BJ (cell line): ENCODE measurements at regions of chr17 and their contacts with region 1.

Region 1: GRCh38 chr17:64420143-64420971 is 28.6 kb upstream of the MILR1 start:
- DNase-seq: peak; percentile 15
- H3K4me3 ChIP-seq: no peak overlapping the region
- H3K27me3 ChIP-seq: peaks cover 2% of the 10 kb centered on the region; the same call in 1 of the 2 replicates
- CTCF ChIP-seq: peak; percentile 71

Region 2: DNA sequence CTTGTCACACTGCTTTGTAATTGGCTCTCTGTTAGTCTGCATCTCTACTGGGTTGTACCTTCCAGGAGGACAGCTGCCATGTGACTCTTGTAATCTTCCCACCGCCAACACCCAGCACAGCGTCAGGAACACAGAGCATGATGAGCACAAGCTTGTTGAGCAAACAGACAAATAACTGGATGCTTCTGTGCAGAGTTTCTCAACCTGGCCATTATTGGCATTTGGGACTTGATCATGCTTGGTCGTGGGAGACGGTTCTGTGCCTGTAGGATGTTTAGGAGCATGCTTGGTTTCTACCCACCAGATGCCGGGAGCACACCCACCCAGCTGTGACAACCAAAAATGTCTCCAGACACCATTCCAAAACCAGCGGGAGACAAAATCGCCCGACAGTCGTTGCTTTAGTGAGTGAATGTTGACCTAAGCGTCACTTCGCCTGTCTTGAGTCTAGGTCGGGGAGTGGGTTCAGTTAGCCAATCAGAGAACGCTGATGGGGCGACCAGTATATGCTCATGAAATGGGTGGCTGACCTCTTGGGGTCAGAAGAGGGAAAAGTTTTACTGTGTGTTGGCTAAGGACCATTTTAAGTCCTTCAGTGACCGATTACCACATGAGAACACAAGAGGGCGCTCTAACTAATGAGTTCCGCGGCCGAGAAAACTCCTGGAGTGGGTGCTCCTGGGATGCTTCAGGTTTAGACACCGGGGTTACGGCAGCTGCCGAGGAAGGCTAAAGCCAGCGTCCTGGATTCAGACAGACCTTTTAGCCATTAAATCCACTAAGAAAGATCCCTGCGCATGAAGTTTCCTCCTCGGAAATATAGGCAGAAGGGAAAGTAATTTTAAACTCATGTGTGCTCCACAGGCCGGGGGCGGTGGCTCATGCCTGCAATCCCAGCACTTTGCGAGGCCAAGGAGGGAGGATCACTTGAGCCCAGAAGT is 99.5 kb before region 1 on chr17:
- CTCF ChIA-PET with region 1: interaction called, 481 read pairs
- POLR2A ChIA-PET with region 1: no interaction called
- DNase-seq: no peak
- H3K4me3 ChIP-seq: no peak overlapping the region
- H3K27me3 ChIP-seq: peaks cover 4% of the 10 kb centered on the region
- CTCF ChIP-seq: peak; percentile 78

Region 3: GRCh38 chr17:64331946-64332493 is 88.3 kb before region 1 on chr17:
- CTCF ChIA-PET with region 1: interaction called, 51 read pairs
- POLR2A ChIA-PET with region 1: no interaction called
- DNase-seq: no peak
- H3K4me3 ChIP-seq: no peak overlapping the region
- H3K27me3 ChIP-seq: peaks cover 2% of the 10 kb centered on the region
- CTCF ChIP-seq: no peak

Region 4: DNA sequence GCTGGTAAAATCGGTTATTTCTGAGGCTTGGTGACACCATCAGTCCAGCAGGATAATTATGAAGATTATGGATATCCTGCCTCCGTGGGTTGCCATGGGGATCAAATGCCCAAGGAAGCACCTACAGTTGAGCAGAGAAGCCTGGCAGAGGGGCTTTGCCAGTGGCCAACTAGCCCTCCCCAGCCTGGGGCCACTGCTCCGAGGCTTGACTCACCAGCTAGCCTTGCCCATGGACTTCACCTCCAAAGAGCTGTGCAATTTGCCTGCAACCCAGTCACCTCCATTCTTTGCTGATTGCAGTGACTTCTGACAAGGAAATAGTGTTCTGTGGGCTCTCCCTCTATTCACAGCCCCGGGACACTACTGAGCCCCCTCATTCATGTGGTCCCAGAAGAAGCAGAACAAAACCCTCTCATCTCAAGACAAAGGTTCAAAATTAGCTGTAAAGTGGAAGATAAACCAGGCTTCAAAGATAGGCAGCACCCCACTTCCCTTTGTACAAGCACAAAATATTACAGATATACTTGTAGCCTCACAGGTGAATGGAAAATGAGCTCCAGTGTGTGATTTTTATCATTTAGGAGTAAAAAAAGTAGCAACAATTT is 31.3 kb before region 1 on chr17:
- CTCF ChIA-PET with region 1: interaction called, 12 read pairs
- POLR2A ChIA-PET with region 1: no interaction called
- DNase-seq: no peak
- H3K4me3 ChIP-seq: no peak overlapping the region
- H3K27me3 ChIP-seq: peaks cover 3% of the 10 kb centered on the region
- CTCF ChIP-seq: no peak

Region 5: GRCh38 chr17:64455993-64456885 is 35.9 kb after region 1 on chr17:
- CTCF ChIA-PET with region 1: interaction called, 10 read pairs
- POLR2A ChIA-PET with region 1: no interaction called
- DNase-seq: no peak
- H3K4me3 ChIP-seq: no peak overlapping the region
- H3K27me3 ChIP-seq: no peaks in the 10 kb centered on the region
- CTCF ChIP-seq: no peak

Region 6: DNA sequence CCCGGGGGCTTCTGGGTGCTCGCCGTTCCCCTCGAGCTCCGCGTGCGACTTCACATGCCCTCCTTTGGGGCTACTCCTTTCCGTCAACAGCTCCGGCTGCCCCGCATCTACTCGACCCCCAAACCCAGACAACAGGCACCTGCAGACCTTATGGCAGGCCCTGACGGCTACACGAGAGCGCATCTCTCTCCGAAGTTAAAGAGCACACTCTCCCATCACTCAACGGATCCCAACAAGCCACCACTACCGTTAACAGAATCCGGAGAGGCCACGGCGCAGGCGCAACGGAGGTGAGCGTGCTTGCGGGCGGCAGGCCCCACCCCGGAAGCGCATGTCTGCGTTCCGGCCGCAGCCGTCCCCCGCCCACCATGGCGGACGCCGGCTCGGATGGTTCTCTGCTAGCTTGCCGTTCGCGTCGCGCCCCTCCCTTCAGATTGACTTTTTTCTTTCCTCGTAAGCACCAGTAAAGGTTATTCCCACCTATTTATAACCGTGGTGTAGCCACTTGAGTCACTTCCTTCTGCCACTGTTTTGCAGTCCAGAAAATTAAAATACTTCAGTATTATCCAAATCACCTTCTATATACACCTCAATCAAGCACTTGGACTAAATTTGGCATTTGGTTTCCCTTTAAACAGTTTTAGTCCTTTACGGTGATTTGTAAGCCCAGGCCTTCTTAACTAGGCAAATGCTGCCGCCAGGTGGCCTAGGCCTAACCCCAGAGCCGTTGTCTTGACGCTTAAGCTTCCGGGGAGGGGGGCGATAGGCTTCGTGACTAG is 76.6 kb after region 1 on chr17 and contains the start of gene POLG2:
- CTCF ChIA-PET with region 1: interaction called, 220 read pairs
- POLR2A ChIA-PET with region 1: no interaction called
- DNase-seq: peak; percentile 65
- H3K4me3 ChIP-seq: peak within 1 kb of the TSS; percentile 74
- H3K27me3 ChIP-seq: no peaks in the 10 kb centered on the region
- CTCF ChIP-seq: peak; percentile 63
- polyA plus RNA-seq, gene POLG2: 4.5 and 5.7 TPM in 2 replicates

Region 7: GRCh38 chr17:64653325-64653984 is 233.1 kb after region 1 on chr17:
- CTCF ChIA-PET with region 1: interaction called, 11 read pairs
- POLR2A ChIA-PET with region 1: no interaction called
- DNase-seq: no peak
- H3K4me3 ChIP-seq: no peak overlapping the region
- H3K27me3 ChIP-seq: no peaks in the 10 kb centered on the region
- CTCF ChIP-seq: no peak